ENCODE measurements at regions of chr5 and their contacts with region 1.

Region 1: GRCh38 chr5:103582364-103582763 is 19.8 kb upstream of the NUDT12 start:
- DNase-seq: peak; percentile 57
- H3K4me3 Mint-ChIP-seq: no peak overlapping the region
- H3K27ac Mint-ChIP-seq: no peak overlapping the region
- H3K4me1 Mint-ChIP-seq: peaks cover 6% of the 10 kb centered on the region
- H3K27me3 Mint-ChIP-seq: no peaks in the 10 kb centered on the region
- CTCF ChIP-seq: peak; percentile 62

Region 2: DNA sequence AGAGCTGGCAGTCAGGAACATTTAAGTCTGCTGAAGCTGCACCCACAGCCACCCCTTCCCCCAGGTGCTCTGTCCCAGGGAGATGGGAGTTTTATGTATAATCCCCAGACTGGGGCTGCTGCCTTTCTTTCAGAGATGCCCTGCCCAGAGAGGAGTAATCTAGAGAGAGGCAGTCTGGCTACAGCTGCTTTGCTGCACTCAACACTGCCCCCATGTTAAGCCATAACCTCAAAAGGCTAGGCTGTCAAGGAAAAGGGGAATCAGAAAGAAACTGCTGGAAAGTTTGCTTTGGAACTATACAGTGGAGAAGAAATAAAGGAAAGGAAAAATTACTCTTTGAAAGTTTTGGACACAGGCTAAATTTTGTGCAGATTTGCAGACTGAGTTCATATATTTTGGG is 196.6 kb before region 1 on chr5:
- CTCF ChIA-PET with region 1: no interaction called
- intact Hi-C with region 1: no loop called
- DNase-seq: no peak
- H3K4me3 Mint-ChIP-seq: no peak overlapping the region
- H3K27ac Mint-ChIP-seq: no peak overlapping the region
- H3K4me1 Mint-ChIP-seq: no peaks in the 10 kb centered on the region
- H3K27me3 Mint-ChIP-seq: no peaks in the 10 kb centered on the region
- CTCF ChIP-seq: no peak

Region 3: DNA sequence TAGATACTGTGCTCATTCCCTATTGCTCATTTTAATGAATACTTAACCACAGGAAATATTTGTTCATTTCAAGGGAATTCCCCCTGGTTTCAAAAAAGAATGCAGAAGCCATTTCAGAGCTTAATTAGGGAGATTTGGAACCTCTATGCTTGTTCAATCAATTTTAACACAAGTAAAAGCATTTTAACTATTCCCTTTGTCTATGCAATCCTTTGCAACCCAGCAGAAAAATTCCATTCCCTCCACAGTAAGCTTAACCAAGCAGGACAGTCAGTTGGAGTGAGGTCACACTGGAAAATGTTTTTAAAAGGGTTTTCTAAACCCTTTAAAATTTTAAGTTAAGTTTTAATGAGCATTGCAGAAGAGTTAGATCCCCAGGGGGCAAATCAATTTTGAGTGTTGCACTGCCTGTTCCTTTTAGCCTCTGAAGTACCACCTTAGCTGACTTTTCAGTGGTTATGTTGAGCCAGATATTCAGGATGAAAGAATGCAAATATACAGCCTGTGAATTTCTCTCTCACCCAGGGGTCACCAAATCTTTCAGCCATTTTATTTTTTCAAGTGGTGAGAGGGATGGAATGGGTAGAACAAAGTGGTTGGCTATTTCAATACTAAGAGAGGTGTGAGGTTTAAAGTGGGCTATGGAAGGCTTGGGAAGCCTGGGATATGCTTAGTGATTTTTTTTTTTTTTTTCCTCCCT is 336.5 kb after region 1 on chr5:
- CTCF ChIA-PET with region 1: no interaction called
- intact Hi-C with region 1: loop called (anchors 10 kb)
- DNase-seq: no peak
- H3K4me3 Mint-ChIP-seq: no peak overlapping the region
- H3K27ac Mint-ChIP-seq: no peak overlapping the region
- H3K4me1 Mint-ChIP-seq: peaks cover 11% of the 10 kb centered on the region
- H3K27me3 Mint-ChIP-seq: no peaks in the 10 kb centered on the region
- CTCF ChIP-seq: no peak

Region 4: DNA sequence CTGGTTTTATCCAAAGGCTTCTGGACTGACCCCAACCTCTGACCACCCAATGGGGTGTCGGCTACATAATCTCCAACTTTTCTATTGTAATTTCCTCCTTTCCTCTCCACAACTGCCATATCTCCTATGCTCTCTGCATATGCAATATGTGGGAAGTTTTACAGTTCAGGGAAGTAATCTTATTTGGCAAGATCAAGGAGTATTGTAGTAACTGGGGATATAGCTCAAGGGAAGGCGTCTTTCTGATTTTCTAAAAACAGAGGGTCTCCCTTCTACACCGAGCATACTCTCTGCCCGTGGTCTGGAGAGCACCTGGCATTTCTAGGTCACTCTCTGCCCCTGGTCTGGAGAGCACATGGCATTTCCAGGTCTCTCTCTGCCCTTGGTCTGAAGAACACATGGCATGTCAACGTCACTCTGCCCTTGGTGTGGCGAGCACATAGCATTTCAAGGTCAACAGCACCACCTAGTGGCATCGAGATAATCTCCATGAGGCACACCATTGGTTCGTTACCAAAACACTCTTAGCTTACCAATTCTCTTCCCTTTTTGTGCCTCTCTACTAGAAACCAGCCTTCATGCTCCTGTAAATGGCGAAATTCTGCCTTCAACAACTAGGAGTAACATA is 596.6 kb after region 1 on chr5:
- CTCF ChIA-PET with region 1: interaction called, 16 read pairs
- intact Hi-C with region 1: loop called (anchors 1 kb)
- DNase-seq: peak; percentile 70
- H3K4me3 Mint-ChIP-seq: no peak overlapping the region
- H3K27ac Mint-ChIP-seq: no peak overlapping the region
- H3K4me1 Mint-ChIP-seq: no peaks in the 10 kb centered on the region
- H3K27me3 Mint-ChIP-seq: no peaks in the 10 kb centered on the region
- CTCF ChIP-seq: peak; percentile 81

Region 5: DNA sequence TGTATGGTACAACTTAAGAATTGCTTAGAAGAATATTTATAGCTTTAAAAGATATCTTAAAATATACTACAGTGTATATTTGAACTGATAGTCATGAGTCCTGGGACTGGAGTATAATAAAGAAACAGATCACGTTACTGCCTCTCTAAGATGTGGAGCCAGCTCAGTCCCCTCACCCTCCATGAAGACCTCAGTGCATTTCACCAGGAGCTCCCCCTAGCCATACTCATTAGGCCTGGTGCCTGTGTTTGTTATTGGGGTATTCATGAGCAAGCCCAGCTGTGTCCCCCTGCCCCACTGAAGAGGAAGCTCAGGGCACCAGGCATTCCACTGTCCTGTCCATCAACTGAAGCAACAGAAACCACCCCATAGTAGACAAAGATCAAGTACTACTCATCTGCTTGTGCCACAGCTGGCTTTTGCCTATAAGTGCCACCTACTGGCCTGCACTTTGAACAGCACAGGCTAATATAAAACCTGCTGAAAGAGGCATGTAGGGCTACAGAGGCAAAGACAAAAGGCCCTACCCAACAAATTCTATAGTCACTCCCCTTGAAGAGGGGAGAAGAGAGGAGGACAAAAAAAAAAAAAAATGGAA is 830.4 kb after region 1 on chr5:
- CTCF ChIA-PET with region 1: interaction called, 4 read pairs
- intact Hi-C with region 1: loop called (anchors 2 kb)
- DNase-seq: peak; percentile 38
- H3K4me3 Mint-ChIP-seq: no peak overlapping the region
- H3K27ac Mint-ChIP-seq: no peak overlapping the region
- H3K4me1 Mint-ChIP-seq: no peaks in the 10 kb centered on the region
- H3K27me3 Mint-ChIP-seq: no peaks in the 10 kb centered on the region
- CTCF ChIP-seq: peak; percentile 72

Region 6: DNA sequence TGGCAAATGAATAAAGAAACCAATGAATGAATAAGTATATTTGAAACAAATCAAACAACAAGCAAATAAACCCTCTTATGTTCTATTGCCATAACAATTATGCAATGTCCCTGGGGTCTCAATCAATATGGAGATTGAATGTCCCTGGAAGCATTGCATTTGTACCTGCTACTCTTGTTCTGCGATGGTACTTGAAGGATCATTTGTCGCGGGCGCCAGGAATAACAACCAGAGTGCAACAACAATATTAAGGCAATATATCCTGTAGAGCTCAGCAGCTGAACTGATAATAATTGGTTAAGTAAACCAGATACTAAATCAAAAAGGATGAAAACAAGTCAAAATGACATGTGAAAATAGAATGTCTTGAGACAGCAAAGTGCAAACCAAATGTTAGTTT is 982.2 kb after region 1 on chr5:
- CTCF ChIA-PET with region 1: no interaction called
- intact Hi-C with region 1: no loop called
- DNase-seq: no peak
- H3K4me3 Mint-ChIP-seq: no peak overlapping the region
- H3K27ac Mint-ChIP-seq: no peak overlapping the region
- H3K4me1 Mint-ChIP-seq: no peaks in the 10 kb centered on the region
- H3K27me3 Mint-ChIP-seq: no peaks in the 10 kb centered on the region
- CTCF ChIP-seq: no peak

Region 7: DNA sequence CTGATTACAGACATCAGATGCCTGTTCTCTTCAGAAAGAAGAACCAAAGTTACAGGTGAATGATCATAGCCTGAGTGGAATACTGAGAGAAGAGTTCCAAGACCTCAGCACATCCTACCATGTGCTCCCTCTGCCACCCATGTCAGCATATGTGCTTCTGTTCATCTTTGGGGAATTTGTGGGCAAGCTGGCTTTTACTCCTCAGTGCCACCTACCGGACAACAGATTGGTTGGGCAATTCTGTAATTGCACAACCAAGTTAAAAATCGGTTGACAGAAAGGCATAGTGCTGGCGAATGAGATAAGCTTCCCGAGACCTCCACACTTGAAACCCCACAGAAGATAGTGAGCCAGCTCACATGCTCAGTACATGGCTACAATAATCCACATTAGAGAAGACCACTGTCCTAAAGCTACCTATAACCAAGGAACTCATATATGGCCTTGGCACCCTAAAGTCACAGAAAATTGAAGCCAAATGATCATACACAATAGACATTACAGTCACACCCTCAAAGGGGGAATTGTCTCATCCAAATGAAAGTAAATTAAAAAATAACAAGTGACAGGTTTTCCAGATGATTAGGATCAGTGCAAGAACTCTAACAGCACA is 1218.2 kb after region 1 on chr5:
- CTCF ChIA-PET with region 1: no interaction called
- intact Hi-C with region 1: loop called (anchors 10 kb)
- DNase-seq: peak; percentile 48
- H3K4me3 Mint-ChIP-seq: no peak overlapping the region
- H3K27ac Mint-ChIP-seq: no peak overlapping the region
- H3K4me1 Mint-ChIP-seq: no peaks in the 10 kb centered on the region
- H3K27me3 Mint-ChIP-seq: no peaks in the 10 kb centered on the region
- CTCF ChIP-seq: peak; percentile 81